Calu3 (cell line): ENCODE measurements at regions of chr1 and their contacts with region 1.

Region 1: DNA sequence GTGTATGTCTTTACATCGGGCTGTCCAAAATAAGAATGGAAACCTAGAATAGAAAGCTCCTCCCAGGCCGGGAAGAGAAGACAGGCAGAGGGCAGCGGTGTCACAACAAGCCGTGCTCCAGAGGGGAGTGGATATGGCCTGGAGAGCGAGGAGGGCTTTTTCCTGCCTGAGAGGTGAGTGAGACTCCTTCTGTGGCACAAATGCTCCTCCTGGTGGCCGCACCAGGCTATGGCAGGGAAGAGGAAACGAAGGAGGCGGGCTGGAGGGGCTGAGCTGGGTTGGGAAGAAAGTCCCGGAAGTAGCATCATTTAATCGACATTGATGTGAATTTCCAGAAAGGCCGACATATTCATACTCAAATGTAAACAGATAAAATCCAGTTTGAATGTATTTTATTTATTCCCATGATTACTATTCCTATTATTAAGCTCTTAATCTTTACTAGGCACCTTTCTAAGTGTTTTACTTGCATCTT is 54.7 kb downstream of the MEF2D start:
- DNase-seq: peak; percentile 94
- H3K4me3 Mint-ChIP-seq: no peak overlapping the region
- H3K27ac Mint-ChIP-seq: no peak overlapping the region
- H3K4me1 Mint-ChIP-seq: peaks cover under 1% of the 10 kb centered on the region
- H3K27me3 Mint-ChIP-seq: peaks cover 72% of the 10 kb centered on the region
- CTCF ChIP-seq: peak; percentile 98

Region 2: DNA sequence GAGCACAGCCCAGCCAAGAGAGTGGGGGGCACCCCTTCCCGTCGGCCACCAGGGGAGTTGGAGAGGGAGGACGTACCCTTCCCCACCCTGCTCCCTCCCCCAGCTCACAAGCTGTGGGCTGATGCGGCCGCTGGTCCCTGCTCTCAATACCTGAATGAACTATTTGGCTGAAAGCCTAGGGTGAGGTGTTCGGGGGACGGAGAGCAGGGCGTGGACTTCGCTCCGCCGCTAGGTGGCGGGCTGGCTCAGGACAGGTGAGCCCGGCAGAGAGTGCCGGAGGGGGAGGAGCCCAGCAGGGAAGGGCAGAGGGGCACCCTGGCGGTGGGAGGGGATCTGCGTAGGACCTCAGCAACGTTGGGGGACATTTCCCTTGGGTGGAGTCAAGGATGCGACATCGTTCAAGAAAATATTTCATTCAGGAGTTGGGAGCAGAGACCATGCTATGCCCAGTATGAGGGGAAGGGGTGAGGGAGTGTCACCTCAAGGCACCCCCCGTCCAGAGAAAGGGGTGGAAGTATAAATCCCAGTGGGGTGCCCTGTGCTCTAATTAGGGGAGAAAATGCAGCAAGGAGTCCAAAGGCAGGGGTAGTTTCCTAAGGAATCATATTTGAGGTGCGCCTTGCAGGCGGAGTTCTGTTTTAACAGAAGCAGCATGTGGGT is 88.8 kb before region 1 on chr1:
- CTCF ChIA-PET with region 1: interaction called, 9 read pairs
- intact Hi-C with region 1: loop called (anchors 1 kb)
- DNase-seq: peak; percentile 93
- H3K4me3 Mint-ChIP-seq: peak overlapping the region; percentile 38
- H3K27ac Mint-ChIP-seq: peak overlapping the region; percentile 11
- H3K4me1 Mint-ChIP-seq: no peaks in the 10 kb centered on the region
- H3K27me3 Mint-ChIP-seq: peaks cover 75% of the 10 kb centered on the region
- CTCF ChIP-seq: peak; percentile 98

Region 3: DNA sequence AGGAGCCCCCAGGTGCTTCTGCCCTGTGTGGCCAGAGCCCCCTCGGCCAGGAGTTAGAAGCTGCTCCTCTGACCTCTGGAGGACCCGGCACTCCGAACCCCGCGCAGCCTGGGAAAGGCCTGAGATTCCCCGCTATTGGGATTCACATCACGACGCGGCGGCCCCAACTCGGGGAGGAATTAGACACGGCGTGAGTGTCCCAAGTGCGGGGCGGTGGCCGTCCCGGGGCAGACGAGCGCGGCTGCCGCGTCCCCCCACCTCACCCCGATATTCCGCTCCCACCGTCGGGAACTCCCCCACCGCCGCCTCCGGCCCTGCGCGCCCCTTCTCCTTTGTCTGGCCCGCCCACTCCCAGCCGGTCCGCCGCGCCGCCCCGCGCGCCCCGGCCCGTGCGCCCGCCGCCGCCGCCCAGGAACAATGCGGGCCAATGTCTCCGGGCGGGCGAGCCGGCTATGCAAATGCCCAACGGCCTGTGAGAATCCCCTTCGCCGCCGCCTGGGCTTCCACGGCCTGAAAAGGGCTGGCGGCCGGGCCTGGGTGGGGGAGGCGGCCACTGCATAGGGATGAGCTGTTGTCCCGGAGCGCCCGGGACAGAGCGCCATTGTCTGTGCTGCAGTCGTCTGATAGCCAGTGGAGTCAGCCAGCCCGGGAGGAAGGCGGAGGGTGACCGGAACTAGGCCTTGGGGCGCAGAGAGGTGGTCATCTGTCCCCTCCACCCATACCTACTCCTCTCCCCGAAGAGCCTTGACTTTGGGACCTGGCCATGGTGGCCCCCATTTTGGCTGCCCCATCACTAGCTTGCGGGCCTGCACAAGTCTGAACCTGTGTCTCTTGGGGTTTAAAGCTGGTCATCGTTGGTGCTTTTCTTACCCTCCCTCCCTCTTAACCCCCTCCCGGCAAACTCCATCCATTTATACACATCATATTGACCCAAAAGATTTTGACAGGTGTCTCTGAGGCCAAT is 57.4 kb before region 1 on chr1:
- CTCF ChIA-PET with region 1: interaction called, 163 read pairs
- intact Hi-C with region 1: loop called (anchors 1 kb)
- DNase-seq: no peak
- H3K4me3 Mint-ChIP-seq: peak overlapping the region; percentile 28
- H3K27ac Mint-ChIP-seq: no peak overlapping the region
- H3K4me1 Mint-ChIP-seq: no peaks in the 10 kb centered on the region
- H3K27me3 Mint-ChIP-seq: peaks cover 51% of the 10 kb centered on the region
- CTCF ChIP-seq: no peak